Gastrocnemius medialis (tissue), 4 donors: ENCODE measurements at regions of chr18 and their contacts with region 1.

Region 1: DNA sequence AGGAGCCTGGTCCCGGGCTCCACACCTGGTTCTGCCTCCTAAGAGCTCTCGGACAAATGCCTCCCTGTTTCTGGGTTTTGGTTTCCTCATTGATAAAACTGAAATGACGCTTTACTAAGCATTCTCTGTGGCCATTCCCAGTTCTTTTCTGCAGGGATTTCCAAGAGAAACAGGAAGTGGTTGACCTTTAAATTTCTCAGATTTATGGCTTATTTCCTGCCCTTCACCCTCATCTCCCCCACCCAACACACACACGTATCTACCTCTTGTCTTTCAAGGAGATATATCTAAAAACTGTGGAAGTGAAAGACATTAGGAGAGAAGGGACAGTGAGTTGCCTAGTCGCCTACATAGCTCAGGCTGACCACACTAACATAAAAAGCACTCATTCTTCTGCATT is 53.0 kb downstream of the PIEZO2 start:
- DNase-seq: no peak
- ATAC-seq: peak in 1 of 2 donors; percentile 31
- H3K4me3 ChIP-seq: no peak overlapping the region
- H3K27ac ChIP-seq: peak overlapping the region; percentile 31 to 71 (median 59)
- H3K4me1 ChIP-seq: peaks cover 14 to 20% of the 10 kb centered on the region in 2 donors
- H3K27me3 ChIP-seq: no peaks in the 10 kb centered on the region
- CTCF ChIP-seq: no peak
- POLR2A ChIP-seq: no peak

Region 2: GRCh38 chr18:11149441-11150270 is 53.2 kb after region 1 on chr18 and contains the start of gene PIEZO2:
- in situ Hi-C with region 1: no loop called
- intact Hi-C with region 1: loop called (anchors 2 kb)
- DNase-seq: peak; percentile 17 to 57
- ATAC-seq: peak; percentile 80 to 82
- H3K4me3 ChIP-seq: peak within 1 kb of the TSS; percentile 53 to 63 (median 62)
- H3K27ac ChIP-seq: no peak within 1 kb of the TSS
- H3K4me1 ChIP-seq: peaks cover 0 to 6% of the 10 kb centered on the region in 2 donors
- H3K27me3 ChIP-seq: peaks cover 6 to 18% (median 15%) of the 10 kb centered on the region in 3 donors
- CTCF ChIP-seq: no peak
- POLR2A ChIP-seq: peak in 1 of 2 donors; percentile 24
- total RNA-seq, gene PIEZO2: 0.18 to 3.0 (median 0.21) TPM

Region 3: DNA sequence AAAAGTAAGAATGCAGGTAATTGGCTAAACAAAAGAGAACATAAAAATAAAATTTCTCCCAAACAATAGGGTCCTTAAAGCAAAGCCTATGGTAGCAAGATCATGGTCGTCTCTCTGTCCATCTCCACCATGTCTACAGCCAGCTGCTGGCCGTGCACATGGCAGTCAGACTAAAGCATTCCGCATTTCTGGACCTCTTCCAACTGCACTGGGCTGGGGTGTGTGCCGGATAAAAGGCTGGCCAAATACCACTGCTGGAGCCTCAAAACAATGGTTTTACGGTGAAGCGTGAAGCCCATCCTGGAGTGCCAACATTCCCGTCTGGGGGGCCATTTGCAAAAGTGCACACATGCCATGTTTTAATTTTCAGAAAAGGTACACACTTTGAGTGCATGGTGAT is 127.7 kb after region 1 on chr18:
- in situ Hi-C with region 1: no loop called
- intact Hi-C with region 1: no loop called
- DNase-seq: no peak
- ATAC-seq: no peak
- H3K4me3 ChIP-seq: no peak overlapping the region
- H3K27ac ChIP-seq: no peak overlapping the region
- H3K4me1 ChIP-seq: no peaks in the 10 kb centered on the region
- H3K27me3 ChIP-seq: no peaks in the 10 kb centered on the region
- CTCF ChIP-seq: no peak
- POLR2A ChIP-seq: no peak